Activated T-helper 1 cell treated with anti-CD3 and anti-CD28 coated beads, Interleukin-12 subunit alpha, Interleukin-12 subunit beta, Interleukin-2, Interleukin-4 antibody, amounts not matched to agents 30 ng/mL and 10 ng/mL and 1 ng/mL, durations not matched to agents 14 hours and 24 hours and 36 hours (primary cell): ENCODE measurements at regions of chr9 and their contacts with region 1.

Region 1: GRCh38 chr9:86948074-86948929 is 996 bp upstream of the GAS1 start:
- DNase-seq: peak; percentile 54
- H3K4me3 Mint-ChIP-seq: peak overlapping the region; percentile 84
- H3K27ac Mint-ChIP-seq: no peak overlapping the region
- H3K4me1 Mint-ChIP-seq: peaks cover 10% of the 10 kb centered on the region
- H3K27me3 Mint-ChIP-seq: peaks cover 21% of the 10 kb centered on the region

Region 2: DNA sequence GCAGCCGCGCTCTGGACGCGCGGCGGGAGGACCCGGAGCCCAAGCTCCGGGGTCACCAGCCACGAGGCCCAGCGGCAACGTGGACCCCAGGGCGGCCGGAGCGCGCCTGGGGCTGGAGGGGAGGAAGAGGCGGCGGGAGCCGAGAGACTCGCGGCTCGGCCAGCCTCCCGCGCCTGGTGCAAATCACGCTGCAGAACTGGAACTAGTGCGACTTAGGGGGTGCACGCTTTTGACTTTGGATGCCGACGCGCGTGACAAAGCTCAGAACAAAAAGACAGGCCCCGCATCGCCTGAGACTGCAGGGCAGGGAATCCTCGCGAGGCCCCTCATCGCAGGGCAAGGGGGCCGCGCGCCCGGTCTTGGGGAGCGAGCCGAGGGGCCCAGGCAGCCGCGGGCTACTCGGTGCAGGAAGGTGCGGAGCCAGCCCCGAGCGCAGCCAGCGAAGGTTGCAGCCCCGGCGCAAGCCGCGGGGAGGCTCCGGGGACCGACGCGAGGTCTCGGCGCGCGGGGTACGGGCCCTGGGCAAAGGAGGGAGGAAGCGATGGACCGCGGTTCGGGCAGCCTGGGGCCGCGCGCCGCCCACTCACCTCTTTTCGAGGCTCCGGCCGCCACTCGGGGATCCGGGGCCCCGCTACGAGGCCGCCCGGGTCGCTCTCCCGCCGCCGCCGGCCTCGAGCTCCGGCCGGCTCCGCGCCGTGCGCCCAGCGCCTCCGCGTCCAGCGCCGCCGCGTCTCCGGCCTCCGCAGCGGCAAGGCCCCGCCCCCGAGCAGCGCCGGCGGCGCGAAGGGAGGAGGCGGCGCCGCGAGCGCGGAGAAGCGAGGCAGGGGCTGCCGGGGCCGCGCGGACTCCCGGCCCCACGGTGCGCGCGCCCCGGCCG is 849.2 kb before region 1 on chr9 and contains the start of gene GOLM1:
- intact Hi-C with region 1: loop called (anchors 10 kb)
- DNase-seq: peak; percentile 30
- H3K4me3 Mint-ChIP-seq: peak within 1 kb of the TSS; percentile 95
- H3K27ac Mint-ChIP-seq: peak within 1 kb of the TSS; percentile 89
- H3K4me1 Mint-ChIP-seq: peaks cover 19% of the 10 kb centered on the region
- H3K27me3 Mint-ChIP-seq: peaks cover 48% of the 10 kb centered on the region
- total RNA-seq, gene GOLM1: 8.1 and 10.1 TPM in 2 replicates

Region 3: DNA sequence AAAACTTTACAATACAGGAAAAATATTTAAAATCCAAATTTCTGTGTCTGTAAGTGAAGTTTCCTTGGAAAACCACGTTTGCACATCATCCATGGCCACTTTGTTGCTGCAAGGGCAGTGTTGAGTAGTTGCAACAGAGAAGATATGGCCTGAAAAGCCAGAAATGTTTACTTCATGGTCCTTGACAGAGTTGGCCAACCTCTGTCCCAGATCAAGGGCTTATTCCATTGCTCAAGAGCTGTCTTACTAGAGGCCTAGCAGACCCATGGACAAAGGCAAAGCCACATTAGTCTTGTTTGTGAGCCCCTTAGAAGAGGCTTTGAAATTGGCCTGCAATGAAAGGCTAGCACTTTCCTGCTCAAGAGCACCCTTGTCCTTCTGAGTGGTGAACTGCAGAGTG is 120.4 kb before region 1 on chr9:
- intact Hi-C with region 1: no loop called
- DNase-seq: no peak
- H3K4me3 Mint-ChIP-seq: no peak overlapping the region
- H3K27ac Mint-ChIP-seq: no peak overlapping the region
- H3K4me1 Mint-ChIP-seq: no peaks in the 10 kb centered on the region
- H3K27me3 Mint-ChIP-seq: peaks cover 2% of the 10 kb centered on the region

Region 4: GRCh38 chr9:86968258-86968920 is 20.1 kb after region 1 on chr9:
- intact Hi-C with region 1: no loop called
- DNase-seq: no peak
- H3K4me3 Mint-ChIP-seq: no peak overlapping the region
- H3K27ac Mint-ChIP-seq: no peak overlapping the region
- H3K4me1 Mint-ChIP-seq: no peaks in the 10 kb centered on the region
- H3K27me3 Mint-ChIP-seq: no peaks in the 10 kb centered on the region

Region 5: DNA sequence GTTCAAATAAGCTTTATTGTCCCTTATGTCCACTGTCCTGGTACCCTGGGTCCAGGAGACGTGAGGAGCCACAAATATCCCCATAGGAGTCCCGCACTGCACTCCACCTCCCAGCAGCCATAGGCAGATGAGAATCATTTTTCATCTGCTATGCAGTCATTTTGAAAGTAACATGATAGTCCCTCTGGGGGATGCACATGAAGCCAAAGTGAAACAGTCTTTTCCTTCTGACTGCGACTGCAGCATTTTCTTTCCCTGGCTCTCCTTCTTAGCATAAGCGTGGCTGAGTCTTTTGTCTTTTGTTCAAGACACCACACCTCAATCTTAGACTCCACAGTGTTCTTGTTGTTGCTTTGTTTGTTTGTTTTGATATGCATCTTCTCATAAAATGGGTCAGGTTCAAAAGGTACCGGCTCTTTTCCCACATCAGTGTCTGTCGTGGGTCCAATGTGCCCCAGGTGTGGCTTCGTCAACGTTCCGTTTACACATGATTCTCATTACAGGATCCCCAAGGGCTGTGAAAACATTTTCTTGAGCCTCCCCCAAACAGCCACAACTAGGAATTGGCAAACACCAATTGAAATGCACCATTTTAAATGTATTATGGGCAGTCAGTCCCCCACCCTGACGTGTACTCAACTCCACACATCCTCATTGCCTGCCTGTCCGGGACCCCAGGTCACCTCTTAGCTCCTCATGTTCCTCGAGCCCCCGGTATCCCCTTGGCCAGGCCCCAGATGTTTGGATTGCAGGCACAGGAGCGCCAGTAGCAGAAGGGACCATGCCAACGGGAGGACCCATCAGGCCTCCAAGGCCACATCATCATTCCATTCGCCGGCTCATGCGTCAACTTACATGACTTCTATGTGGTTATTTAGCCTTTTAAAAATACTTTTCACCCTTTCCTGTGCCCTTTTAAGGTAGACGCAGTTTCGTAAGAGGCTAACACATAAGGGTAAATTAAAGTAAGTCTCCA is 311.5 kb after region 1 on chr9:
- intact Hi-C with region 1: no loop called
- DNase-seq: no peak
- H3K4me3 Mint-ChIP-seq: no peak overlapping the region
- H3K27ac Mint-ChIP-seq: no peak overlapping the region
- H3K4me1 Mint-ChIP-seq: no peaks in the 10 kb centered on the region
- H3K27me3 Mint-ChIP-seq: peaks cover 5% of the 10 kb centered on the region

Region 6: DNA sequence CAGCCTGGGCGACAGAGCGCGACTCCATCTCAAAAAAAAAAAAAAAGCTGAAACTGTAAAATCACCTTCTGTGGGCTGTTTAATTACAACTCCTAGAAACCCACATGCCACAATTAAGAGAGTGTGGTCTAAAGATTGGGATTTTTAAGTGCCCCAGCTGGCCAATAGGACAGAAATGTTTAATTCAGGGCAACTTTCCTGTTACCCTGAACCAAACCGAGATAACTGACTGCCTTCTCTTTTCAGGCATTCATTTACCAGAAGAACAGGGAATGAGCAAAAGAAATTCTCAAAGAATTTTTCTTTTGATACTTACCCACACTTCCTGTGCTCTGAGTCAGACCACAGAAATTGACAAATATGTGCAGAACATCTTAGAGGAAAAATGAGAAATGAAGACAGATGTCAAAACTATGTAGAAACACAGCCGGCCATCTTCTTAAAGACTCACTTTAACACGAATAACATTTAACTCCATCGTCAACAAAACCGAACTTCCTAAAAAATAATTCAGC is 328.1 kb after region 1 on chr9:
- intact Hi-C with region 1: loop called (anchors 5 kb)
- DNase-seq: no peak
- H3K4me3 Mint-ChIP-seq: no peak overlapping the region
- H3K27ac Mint-ChIP-seq: peak overlapping the region; percentile 35
- H3K4me1 Mint-ChIP-seq: peaks cover 20% of the 10 kb centered on the region
- H3K27me3 Mint-ChIP-seq: peaks cover 11% of the 10 kb centered on the region

Region 7: DNA sequence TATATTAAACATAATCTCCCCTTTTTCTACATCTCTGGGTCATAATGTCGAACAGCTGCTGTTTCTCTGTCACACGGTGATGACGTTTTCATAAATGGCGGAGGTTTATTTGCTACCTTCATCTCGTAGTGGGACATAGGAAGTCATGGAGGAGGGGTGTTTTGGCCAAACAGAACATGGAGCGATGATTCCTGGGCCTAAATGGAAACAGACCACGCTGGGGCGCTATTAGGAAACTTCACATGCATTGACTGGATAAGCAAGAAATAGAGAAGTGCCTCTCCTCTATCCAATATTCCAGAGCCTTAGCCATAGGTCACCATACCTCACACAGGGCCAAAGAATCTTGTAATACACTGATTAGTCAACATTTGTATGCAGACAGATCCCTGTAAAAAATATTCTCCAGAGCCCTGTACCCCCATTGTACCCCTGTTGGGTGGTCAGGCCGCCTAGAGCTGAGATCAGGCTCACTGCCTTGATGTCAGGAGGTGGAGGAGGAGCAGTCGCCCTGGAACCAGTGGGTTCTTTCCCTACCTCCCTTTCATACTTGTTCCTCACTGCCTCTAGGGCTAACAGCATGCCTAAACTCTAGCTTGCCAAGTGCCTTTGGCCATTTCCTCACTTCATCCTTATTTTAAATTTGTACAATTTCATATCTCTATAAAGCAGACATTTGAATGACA is 1362.2 kb after region 1 on chr9:
- intact Hi-C with region 1: loop called (anchors 5 kb)
- DNase-seq: no peak
- H3K4me3 Mint-ChIP-seq: no peak overlapping the region
- H3K27ac Mint-ChIP-seq: peak overlapping the region; percentile 48
- H3K4me1 Mint-ChIP-seq: peaks cover 70% of the 10 kb centered on the region
- H3K27me3 Mint-ChIP-seq: peaks cover 1% of the 10 kb centered on the region